ENCODE measurements at regions of chr22 and their contacts with region 1.

Region 1: DNA sequence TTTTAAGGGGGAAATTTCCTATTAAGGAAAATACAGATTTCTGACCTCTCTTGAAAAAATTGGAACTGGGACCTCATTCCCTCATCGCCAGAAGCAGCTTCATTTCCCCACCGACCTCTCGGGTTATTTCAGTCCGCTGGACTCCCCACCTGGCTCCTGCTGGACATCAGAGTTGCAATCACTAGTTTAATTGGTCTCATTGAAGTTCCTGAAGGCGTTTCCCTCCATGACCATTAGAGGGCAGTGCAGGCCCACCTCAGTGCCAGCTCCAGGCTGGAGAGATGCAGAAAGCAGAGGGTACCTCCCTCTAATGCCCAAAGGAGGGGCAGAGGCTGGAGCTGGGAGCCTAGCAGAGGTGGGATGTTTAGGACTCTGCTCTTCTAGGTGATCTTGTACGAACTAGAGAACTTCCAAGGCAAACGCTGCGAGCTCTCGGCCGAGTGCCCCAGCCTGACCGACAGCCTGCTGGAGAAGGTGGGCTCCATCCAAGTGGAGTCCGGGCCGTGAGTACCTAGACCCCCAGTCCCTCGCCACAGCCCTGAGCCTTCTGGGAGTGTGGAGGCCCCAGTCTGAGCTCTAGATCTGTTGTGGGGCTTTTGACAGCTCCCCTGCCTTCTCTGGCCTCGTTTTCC is 2.7 kb downstream of the CRYBB3 start:
- DNase-seq: peak; percentile 18 to 64 (median 52)
- ATAC-seq: peak; percentile 68
- H3K4me3 ChIP-seq: no peak overlapping the region
- H3K4me3 Mint-ChIP-seq: no peak overlapping the region
- H3K27ac ChIP-seq: no peak overlapping the region
- H3K27ac Mint-ChIP-seq: no peak overlapping the region
- H3K4me1 ChIP-seq: no peaks in the 10 kb centered on the region
- H3K4me1 Mint-ChIP-seq: no peaks in the 10 kb centered on the region
- H3K27me3 ChIP-seq: no peaks in the 10 kb centered on the region
- H3K27me3 Mint-ChIP-seq: no peaks in the 10 kb centered on the region
- CTCF ChIP-seq: peak; percentile 88

Region 2: DNA sequence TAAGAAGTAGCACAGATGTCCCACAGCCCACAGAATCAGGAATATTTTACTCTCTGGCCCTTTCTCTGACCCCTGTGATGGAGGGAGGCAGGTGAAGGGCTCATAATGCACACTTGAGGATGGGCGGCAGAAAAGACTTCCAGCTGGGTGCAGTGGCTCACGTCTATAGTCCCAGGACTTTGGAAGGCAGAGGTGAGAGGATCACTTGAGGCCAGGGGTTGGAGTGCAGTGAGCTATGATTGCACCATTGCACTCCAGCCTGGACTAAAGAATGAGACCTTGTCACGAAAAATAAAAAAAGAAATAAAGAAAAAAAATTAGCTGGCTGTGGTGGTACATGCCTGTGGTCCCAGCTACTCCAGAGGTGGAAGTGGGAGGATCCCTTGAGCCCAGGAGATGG is 16.3 kb before region 1 on chr22:
- CTCF ChIA-PET with region 1: interaction called, 13 read pairs
- POLR2A ChIA-PET with region 1: no interaction called
- intact Hi-C with region 1: no loop called
- DNase-seq: no peak
- ATAC-seq: no peak
- H3K4me3 ChIP-seq: no peak overlapping the region
- H3K4me3 Mint-ChIP-seq: no peak overlapping the region
- H3K27ac ChIP-seq: no peak overlapping the region
- H3K27ac Mint-ChIP-seq: no peak overlapping the region
- H3K4me1 ChIP-seq: no peaks in the 10 kb centered on the region
- H3K4me1 Mint-ChIP-seq: no peaks in the 10 kb centered on the region
- H3K27me3 ChIP-seq: no peaks in the 10 kb centered on the region
- H3K27me3 Mint-ChIP-seq: no peaks in the 10 kb centered on the region
- CTCF ChIP-seq: no peak

Region 3: DNA sequence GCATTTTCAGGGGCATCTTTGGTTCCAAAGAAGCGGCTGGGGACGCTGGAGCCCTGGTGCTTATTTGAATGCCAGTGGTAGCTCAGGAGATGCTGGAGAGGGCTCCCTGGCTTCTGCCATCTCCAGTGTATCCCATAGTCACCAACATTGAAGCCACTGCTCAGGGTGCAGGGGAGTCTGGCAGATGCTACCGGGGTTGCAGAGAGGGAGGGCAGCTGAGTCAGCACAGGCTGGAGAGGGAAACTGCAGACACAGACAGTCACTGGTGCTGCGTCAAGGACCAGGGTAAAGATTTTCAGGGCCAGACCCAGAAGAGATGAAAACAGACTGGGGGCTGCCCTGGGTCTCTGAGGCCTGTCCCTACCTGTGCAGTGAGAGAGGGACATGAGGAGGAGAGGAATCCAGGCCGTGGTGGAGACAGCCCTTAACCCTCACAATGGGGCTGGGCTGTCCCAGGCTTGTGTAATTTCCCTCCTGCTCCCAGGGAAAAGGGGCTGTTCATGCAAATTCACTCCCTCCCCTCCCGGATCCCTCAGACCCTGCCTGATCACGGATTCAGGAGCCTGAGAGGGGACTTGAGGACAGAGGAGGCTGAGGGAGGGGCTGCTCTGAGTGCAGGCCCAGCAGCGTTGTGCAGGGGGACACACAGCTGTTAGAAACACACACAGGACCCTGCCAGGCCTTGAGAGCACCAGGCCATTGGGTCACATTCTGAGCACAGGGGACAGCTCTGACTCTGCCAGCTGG is 235.2 kb after region 1 on chr22:
- CTCF ChIA-PET with region 1: no interaction called
- POLR2A ChIA-PET with region 1: no interaction called
- intact Hi-C with region 1: no loop called
- DNase-seq: no peak
- ATAC-seq: no peak
- H3K4me3 ChIP-seq: no peak overlapping the region
- H3K4me3 Mint-ChIP-seq: no peak overlapping the region
- H3K27ac ChIP-seq: no peak overlapping the region
- H3K27ac Mint-ChIP-seq: no peak overlapping the region
- H3K4me1 ChIP-seq: no peaks in the 10 kb centered on the region
- H3K4me1 Mint-ChIP-seq: no peaks in the 10 kb centered on the region
- H3K27me3 ChIP-seq: peaks cover 0 to 3% of the 10 kb centered on the region in 2 experiments
- H3K27me3 Mint-ChIP-seq: no peaks in the 10 kb centered on the region
- CTCF ChIP-seq: no peak

Measured in CD8-positive, alpha-beta T cell (primary cell).